Stomach (tissue), 19 donors: ENCODE measurements at regions of chr3 and their contacts with region 1.

Region 1: GRCh38 chr3:168213920-168214319 is 118.2 kb upstream of the GOLIM4 start:
- DNase-seq: no peak
- H3K4me3 ChIP-seq: no peak overlapping the region
- H3K27ac ChIP-seq: no peak overlapping the region
- H3K4me1 ChIP-seq: peaks cover 0 to 6% (median 2%) of the 10 kb centered on the region in 4 donors
- H3K27me3 ChIP-seq: no peaks in the 10 kb centered on the region
- CTCF ChIP-seq: no peak
- EP300 ChIP-seq: no peak
- POLR2A ChIP-seq: no peak

Region 2: DNA sequence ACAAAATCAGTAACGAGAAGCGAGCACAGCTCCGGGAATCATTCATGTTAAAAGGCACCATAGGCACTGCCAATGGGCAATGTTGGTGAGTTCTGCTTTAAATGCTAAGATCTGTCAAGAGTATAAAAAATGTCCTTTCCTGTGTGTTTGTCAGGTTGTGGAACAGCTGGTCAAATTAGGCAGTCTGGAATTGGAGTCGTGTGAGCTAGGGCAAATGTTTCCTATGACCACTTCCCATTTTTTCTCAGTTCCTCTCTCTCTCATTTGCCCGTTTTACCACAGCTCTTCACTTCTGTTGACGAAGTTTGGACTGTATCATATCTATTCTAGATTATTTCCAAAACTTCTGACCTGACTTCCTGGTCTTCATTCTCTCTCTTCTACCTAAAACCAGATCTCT is 57.4 kb before region 1 on chr3:
- intact Hi-C with region 1: no loop called
- DNase-seq: peak in 1 of 2 donors; percentile 20
- H3K4me3 ChIP-seq: no peak overlapping the region
- H3K27ac ChIP-seq: no peak overlapping the region
- H3K4me1 ChIP-seq: peaks cover 0 to 5% (median 0%) of the 10 kb centered on the region in 4 donors
- H3K27me3 ChIP-seq: no peaks in the 10 kb centered on the region
- CTCF ChIP-seq: no peak
- EP300 ChIP-seq: no peak
- POLR2A ChIP-seq: no peak

Region 3: DNA sequence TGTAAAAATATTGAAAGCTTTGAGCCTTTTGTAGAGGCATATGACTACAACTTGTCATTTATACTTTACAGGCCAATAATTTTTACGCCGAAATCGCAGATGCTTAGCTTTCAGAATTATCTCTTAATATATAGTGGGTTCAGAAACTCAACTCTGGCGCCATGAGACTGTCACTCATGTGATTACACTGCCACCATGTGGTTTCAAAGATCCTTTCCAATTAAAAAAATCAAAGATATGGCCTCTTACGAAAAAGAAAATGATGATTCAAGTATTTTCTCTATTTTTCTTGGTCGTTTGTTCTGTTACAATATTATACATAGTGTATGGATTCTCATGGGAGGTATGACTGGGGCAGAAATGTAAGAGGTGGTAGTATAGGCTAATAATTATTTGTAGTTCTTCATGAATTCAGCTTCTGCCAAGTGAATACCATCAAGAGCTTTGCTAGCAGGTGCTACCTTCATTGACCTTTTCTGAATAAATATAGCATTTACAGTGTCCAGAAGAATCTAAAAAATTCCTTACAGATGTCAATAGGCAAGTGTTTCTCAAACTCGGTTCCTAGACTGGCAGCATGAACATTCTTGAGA is 633.5 kb after region 1 on chr3:
- intact Hi-C with region 1: loop called (anchors 5 kb)
- DNase-seq: peak in 1 of 2 donors; percentile 78
- H3K4me3 ChIP-seq: no peak overlapping the region
- H3K27ac ChIP-seq: no peak overlapping the region
- H3K4me1 ChIP-seq: peaks cover 0 to 9% (median 4%) of the 10 kb centered on the region in 4 donors
- H3K27me3 ChIP-seq: no peaks in the 10 kb centered on the region
- CTCF ChIP-seq: peak in 5 of 7 experiments; percentile 16 to 66 (median 50)
- EP300 ChIP-seq: no peak
- POLR2A ChIP-seq: no peak